H1 (cell line): ENCODE measurements at regions of chr5 and their contacts with region 1.

Region 1: GRCh38 chr5:33440482-33441240 is at the start of gene TARS1:
- DNase-seq: peak; percentile 95 to 96
- H3K4me3 ChIP-seq: peak within 1 kb of the TSS; percentile 81 to 97 (median 88)
- H3K27ac ChIP-seq: peak within 1 kb of the TSS; percentile 89
- H3K4me1 ChIP-seq: peaks cover 0 to 9% (median 4%) of the 10 kb centered on the region in 4 experiments; a peak in 3 of 7 replicates
- H3K27me3 ChIP-seq: no peaks in the 10 kb centered on the region
- CTCF ChIP-seq: no peak
- EP300 ChIP-seq: no peak
- POLR2A ChIP-seq: peak; percentile 90 to 98
- RAD21 ChIP-seq: no peak
- total RNA-seq, gene TARS1: 445 TPM in 2 replicates

Region 2: GRCh38 chr5:33470544-33470943 is 29.9 kb after region 1 on chr5:
- CTCF ChIA-PET with region 1: no interaction called
- POLR2A ChIA-PET with region 1: interaction called, 59 read pairs
- DNase-seq: no peak
- H3K4me3 ChIP-seq: no peak overlapping the region
- H3K27ac ChIP-seq: no peak overlapping the region
- H3K4me1 ChIP-seq: peaks cover 0 to 9% (median 0%) of the 10 kb centered on the region in 4 experiments; a peak in 1 of 7 replicates
- H3K27me3 ChIP-seq: no peaks in the 10 kb centered on the region
- CTCF ChIP-seq: peak in 1 of 3 experiments; percentile 27; a peak in 2 of 4 replicates
- EP300 ChIP-seq: no peak
- POLR2A ChIP-seq: no peak; a peak in 1 of 3 replicates
- RAD21 ChIP-seq: peak; percentile 52 to 60

Region 3: DNA sequence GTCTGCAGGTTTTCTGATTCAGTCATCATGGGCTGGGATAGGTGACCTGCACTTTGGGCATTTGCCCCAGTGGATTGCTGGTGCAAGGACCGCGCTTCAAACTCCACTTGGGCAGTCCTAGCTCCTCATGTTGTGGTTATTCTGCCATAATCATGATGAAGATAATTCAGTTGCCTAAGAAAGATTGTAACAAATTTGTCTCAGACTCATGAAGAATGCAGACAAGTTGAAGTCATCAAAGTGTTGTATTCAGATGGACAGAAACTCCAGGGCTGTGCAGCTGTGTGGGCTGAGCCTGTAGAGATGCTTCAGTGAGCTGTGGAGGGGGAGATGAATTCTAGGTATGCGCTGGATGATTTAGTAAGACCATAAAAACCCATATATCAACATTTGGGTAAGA is 38.6 kb after region 1 on chr5:
- CTCF ChIA-PET with region 1: interaction called, 3 read pairs
- POLR2A ChIA-PET with region 1: interaction called, 21 read pairs
- DNase-seq: no peak
- H3K4me3 ChIP-seq: no peak overlapping the region
- H3K27ac ChIP-seq: no peak overlapping the region
- H3K4me1 ChIP-seq: peaks cover 0 to 2% (median 0%) of the 10 kb centered on the region in 4 experiments; a peak in 1 of 7 replicates
- H3K27me3 ChIP-seq: no peaks in the 10 kb centered on the region
- CTCF ChIP-seq: no peak
- EP300 ChIP-seq: no peak
- POLR2A ChIP-seq: no peak
- RAD21 ChIP-seq: no peak